AG04450 (cell line): ENCODE measurements at regions of chr1 and their contacts with region 1.

Region 1: GRCh38 chr1:204446370-204447111 is 34.9 kb upstream of the PPP1R15B start:
- DNase-seq: no peak
- H3K4me3 ChIP-seq: no peak overlapping the region
- H3K27ac ChIP-seq: no peak overlapping the region
- H3K27me3 ChIP-seq: no peaks in the 10 kb centered on the region
- CTCF ChIP-seq: peak; percentile 81

Region 2: GRCh38 chr1:204465546-204466415 is 19.2 kb after region 1 on chr1:
- CTCF ChIA-PET with region 1: interaction called, 11 read pairs
- POLR2A ChIA-PET with region 1: no interaction called
- DNase-seq: no peak
- H3K4me3 ChIP-seq: no peak overlapping the region
- H3K27ac ChIP-seq: no peak overlapping the region
- H3K27me3 ChIP-seq: no peaks in the 10 kb centered on the region
- CTCF ChIP-seq: no peak

Region 3: GRCh38 chr1:204487256-204487615 is 40.7 kb after region 1 on chr1:
- CTCF ChIA-PET with region 1: interaction called, 483 read pairs
- POLR2A ChIA-PET with region 1: no interaction called
- DNase-seq: no peak
- H3K4me3 ChIP-seq: no peak overlapping the region
- H3K27ac ChIP-seq: no peak overlapping the region
- H3K27me3 ChIP-seq: no peaks in the 10 kb centered on the region
- CTCF ChIP-seq: no peak

Region 4: GRCh38 chr1:204494281-204495077 is 47.9 kb after region 1 on chr1 and contains the start of gene PIK3C2B:
- CTCF ChIA-PET with region 1: interaction called, 483 read pairs
- POLR2A ChIA-PET with region 1: no interaction called
- DNase-seq: peak; percentile 33
- H3K4me3 ChIP-seq: peak within 1 kb of the TSS; percentile 87
- H3K27ac ChIP-seq: peak within 1 kb of the TSS; percentile 70
- H3K27me3 ChIP-seq: peaks cover 8% of the 10 kb centered on the region
- CTCF ChIP-seq: peak; percentile 34; the same call in 1 of the 2 replicates
- polyA plus RNA-seq, gene PIK3C2B: 4.9 and 6.3 TPM in 2 replicates